ENCODE measurements at regions of chr13 and their contacts with region 1.

Region 1: GRCh38 chr13:110412132-110412914 is 105.2 kb downstream of the COL4A2 start:
- DNase-seq: peak; percentile 82
- H3K4me3 ChIP-seq: no peak overlapping the region
- H3K27ac ChIP-seq: peak overlapping the region; percentile 79 to 89 (median 84)
- H3K4me1 ChIP-seq: peaks cover 5 to 42% (median 29%) of the 10 kb centered on the region in 4 donors
- H3K27me3 ChIP-seq: no peaks in the 10 kb centered on the region
- CTCF ChIP-seq: peak; percentile 79 to 97 (median 88)
- EP300 ChIP-seq: peak; percentile 85
- POLR2A ChIP-seq: no peak

Region 2: GRCh38 chr13:108961542-108962125 is 1450.7 kb before region 1 on chr13:
- in situ Hi-C with region 1: loop called in 1 of 4 experiments (anchors 25 kb)
- intact Hi-C with region 1: no loop called
- DNase-seq: no peak
- H3K4me3 ChIP-seq: no peak overlapping the region
- H3K27ac ChIP-seq: no peak overlapping the region
- H3K4me1 ChIP-seq: no peaks in the 10 kb centered on the region
- H3K27me3 ChIP-seq: no peaks in the 10 kb centered on the region
- CTCF ChIP-seq: peak; percentile 76 to 87 (median 84)
- EP300 ChIP-seq: no peak
- POLR2A ChIP-seq: no peak

Region 3: DNA sequence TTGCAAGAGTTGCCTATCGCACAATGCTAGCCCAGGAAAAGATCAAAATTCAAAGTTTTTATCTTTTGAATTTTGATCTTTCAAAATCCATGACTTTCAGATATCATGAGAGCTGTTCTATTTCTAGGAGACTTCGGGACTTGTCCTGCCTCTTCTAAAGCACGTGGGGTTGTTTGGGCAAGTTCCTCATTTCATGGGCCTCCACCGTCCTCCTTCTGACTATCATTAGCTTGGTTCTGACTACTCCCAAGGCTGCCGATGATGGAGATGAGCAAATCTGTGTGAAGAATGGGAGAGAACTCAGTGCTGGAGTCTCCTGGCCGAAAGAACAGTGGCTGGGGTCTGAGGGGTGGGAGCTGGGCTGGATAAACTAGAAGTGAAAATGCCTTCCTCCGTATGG is 191.9 kb before region 1 on chr13:
- in situ Hi-C with region 1: loop called in 2 of 4 experiments (anchors 10 to 25 kb)
- intact Hi-C with region 1: loop called (anchors 5 kb)
- DNase-seq: no peak
- H3K4me3 ChIP-seq: no peak overlapping the region
- H3K27ac ChIP-seq: peak overlapping the region; percentile 51 to 91 (median 84)
- H3K4me1 ChIP-seq: peaks cover 0 to 33% (median 12%) of the 10 kb centered on the region in 4 donors
- H3K27me3 ChIP-seq: no peaks in the 10 kb centered on the region
- CTCF ChIP-seq: no peak
- EP300 ChIP-seq: no peak
- POLR2A ChIP-seq: no peak

Region 4: GRCh38 chr13:110225609-110226562 is 186.4 kb before region 1 on chr13:
- in situ Hi-C with region 1: loop called in 3 of 4 experiments (anchors 10 to 25 kb)
- intact Hi-C with region 1: loop called (anchors 5 kb)
- DNase-seq: no peak
- H3K4me3 ChIP-seq: no peak overlapping the region
- H3K27ac ChIP-seq: peak overlapping the region; percentile 49 to 82 (median 59)
- H3K4me1 ChIP-seq: peaks cover 0 to 15% (median 7%) of the 10 kb centered on the region in 4 donors
- H3K27me3 ChIP-seq: no peaks in the 10 kb centered on the region
- CTCF ChIP-seq: no peak
- EP300 ChIP-seq: no peak
- POLR2A ChIP-seq: no peak

Region 5: DNA sequence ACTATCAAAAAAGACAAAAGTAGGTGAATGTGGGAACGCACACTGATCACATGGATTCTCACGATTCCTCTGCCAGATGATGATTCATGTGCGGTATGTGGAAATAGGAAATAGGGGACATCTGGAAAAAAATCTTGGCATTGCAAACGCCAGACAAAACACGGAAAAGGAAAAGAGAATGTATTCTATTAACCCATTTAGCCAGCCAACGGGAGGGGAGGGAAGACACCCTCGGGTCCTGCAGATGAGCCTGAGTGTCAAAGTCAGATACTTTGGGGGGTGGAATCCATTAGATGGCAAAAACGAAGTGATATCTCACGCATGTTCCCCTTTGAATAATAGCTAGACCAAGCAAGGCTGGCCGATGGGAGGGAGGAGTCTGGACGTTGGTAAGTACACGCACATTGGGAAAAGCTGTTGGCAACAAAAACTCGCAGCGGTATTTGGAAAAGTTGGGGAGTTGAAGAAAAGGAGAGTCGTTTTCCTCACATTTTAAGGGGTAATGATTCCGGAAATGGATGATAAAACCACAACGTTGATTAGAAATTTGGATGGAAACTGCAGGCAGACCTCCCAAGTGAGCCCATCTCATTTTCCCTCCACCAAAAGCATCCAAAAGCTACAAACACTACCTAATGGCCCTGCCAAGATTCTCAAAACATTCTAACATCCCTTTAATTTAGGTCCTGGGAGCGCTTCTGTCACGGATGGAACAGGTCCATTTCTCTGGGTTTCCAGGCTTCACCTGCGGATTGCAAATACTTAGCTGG is 179.0 kb before region 1 on chr13:
- in situ Hi-C with region 1: loop called in 3 of 4 experiments (anchors 10 to 25 kb)
- intact Hi-C with region 1: no loop called
- DNase-seq: no peak
- H3K4me3 ChIP-seq: no peak overlapping the region
- H3K27ac ChIP-seq: peak overlapping the region; percentile 58 to 75 (median 68)
- H3K4me1 ChIP-seq: peaks cover 8 to 32% (median 20%) of the 10 kb centered on the region in 4 donors
- H3K27me3 ChIP-seq: no peaks in the 10 kb centered on the region
- CTCF ChIP-seq: no peak
- EP300 ChIP-seq: no peak
- POLR2A ChIP-seq: no peak

Region 6: GRCh38 chr13:110306960-110307746 is 105.2 kb before region 1 on chr13 and contains the starts of genes COL4A1 and COL4A2:
- in situ Hi-C with region 1: no loop called
- intact Hi-C with region 1: loop called (anchors 10 kb)
- DNase-seq: peak; percentile 61
- H3K4me3 ChIP-seq: peak within 1 kb of the TSS; percentile 58 to 88 (median 74)
- H3K27ac ChIP-seq: peak within 1 kb of the TSS; percentile 88 to 98 (median 94)
- H3K4me1 ChIP-seq: peaks cover 0 to 39% (median 28%) of the 10 kb centered on the region in 4 donors
- H3K27me3 ChIP-seq: peaks cover 37% of the 10 kb centered on the region
- CTCF ChIP-seq: no peak
- EP300 ChIP-seq: no peak
- POLR2A ChIP-seq: peak; percentile 69
- total RNA-seq, gene COL4A1: 46.4 to 180 (median 99.2) TPM
- total RNA-seq, gene COL4A2: 75.1 to 322 (median 115) TPM

Region 7: DNA sequence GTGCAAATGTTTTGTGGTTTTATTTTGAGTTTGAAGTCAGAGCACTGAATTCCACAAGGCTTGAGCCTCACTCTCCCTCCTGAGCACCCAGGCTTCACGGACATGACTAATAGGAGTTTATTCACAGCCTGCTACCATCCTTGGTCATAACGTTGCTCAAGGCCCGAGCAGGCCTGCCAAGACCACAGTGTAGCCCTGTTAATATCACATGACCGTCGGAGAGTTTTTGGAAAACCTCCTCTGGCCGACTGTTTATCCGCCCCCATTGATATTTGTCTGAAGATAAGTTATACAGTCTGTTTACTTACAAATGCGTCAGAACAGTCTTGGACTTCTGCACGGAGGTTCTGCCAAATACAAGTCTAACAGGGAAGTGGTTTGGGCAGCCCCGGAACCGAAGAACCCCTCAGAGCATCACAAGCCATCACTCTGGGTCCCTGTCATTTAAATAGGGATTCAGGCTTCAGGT is 15.4 kb before region 1 on chr13:
- in situ Hi-C with region 1: no loop called
- intact Hi-C with region 1: loop called (anchors 2 kb)
- DNase-seq: peak; percentile 77
- H3K4me3 ChIP-seq: no peak overlapping the region
- H3K27ac ChIP-seq: peak overlapping the region; percentile 77 to 94 (median 88)
- H3K4me1 ChIP-seq: peaks cover 8 to 40% (median 14%) of the 10 kb centered on the region in 4 donors
- H3K27me3 ChIP-seq: no peaks in the 10 kb centered on the region
- CTCF ChIP-seq: no peak
- EP300 ChIP-seq: peak; percentile 82
- POLR2A ChIP-seq: no peak